Psoas muscle (tissue), 8 donors: ENCODE measurements at regions of chr7 and their contacts with region 1.

Region 1: DNA sequence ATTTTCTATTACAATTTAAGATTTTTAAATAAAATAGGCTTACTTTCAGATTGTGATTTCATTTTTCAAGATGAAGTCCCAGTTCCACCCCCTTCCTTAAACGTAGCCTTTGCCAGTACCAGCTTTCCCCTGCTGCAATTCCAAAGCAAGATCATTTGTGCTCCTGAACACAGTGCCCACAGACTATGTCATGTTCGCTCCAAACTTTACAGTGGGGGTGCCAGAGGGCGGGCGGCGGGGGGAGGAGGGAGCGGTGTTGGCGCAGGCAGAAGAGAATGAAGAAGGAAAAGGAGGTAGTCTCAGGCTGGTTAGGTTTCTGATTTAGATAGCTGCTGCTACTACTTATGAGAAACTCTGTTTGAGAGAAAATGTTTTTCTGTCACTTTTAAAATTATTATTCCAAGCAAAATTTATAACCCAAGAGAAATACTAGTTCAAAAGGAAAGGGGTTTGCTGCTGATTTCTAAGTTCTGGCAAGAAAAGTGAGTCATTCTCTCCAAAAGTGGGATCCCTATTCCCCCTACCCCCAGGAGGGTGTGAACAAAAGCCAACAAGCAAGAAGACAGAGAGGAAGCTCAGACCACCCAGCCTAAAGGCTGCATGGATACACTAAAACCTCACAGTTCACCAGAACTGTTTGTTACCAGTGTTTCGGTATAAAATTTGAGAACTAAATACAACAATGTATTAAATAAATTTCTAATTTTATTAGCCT is 109.6 kb downstream of the SRPK2 start:
- DNase-seq: no peak
- ATAC-seq: peak in 1 of 4 donors; percentile 71
- H3K4me3 ChIP-seq: no peak overlapping the region
- H3K27ac ChIP-seq: no peak overlapping the region
- H3K4me1 ChIP-seq: peaks cover 14% of the 10 kb centered on the region
- H3K27me3 ChIP-seq: no peaks in the 10 kb centered on the region
- CTCF ChIP-seq: no peak

Region 2: DNA sequence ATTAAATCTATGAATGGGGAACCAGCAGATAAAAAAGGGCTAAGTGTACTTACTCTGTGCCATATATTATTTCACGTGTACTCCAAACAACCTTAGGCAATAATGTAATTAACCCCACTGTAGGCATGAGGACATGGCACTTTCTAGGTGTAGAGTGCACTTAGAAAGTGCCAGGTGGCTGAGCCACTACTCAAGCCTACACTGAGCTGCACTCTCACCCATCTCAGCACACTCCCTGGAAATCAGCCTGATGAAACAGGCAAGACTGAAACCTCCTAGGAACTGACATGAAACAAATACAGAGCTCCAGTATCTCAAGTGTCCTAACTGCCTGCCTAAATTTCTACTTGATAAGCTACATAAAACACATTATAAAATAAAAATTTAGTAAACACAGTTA is 117.8 kb before region 1 on chr7:
- intact Hi-C with region 1: loop called in 1 of 2 experiments (anchors 10 kb)
- DNase-seq: no peak
- ATAC-seq: peak in 1 of 4 donors; percentile 35
- H3K4me3 ChIP-seq: no peak overlapping the region
- H3K27ac ChIP-seq: no peak overlapping the region
- H3K4me1 ChIP-seq: no peaks in the 10 kb centered on the region
- H3K27me3 ChIP-seq: no peaks in the 10 kb centered on the region
- CTCF ChIP-seq: no peak